AG04450 (cell line): ENCODE measurements at regions of chr6 and their contacts with region 1.

Region 1: GRCh38 chr6:37007340-37008043 is 2.0 kb downstream of the FGD2 start:
- DNase-seq: no peak
- H3K4me3 ChIP-seq: no peak overlapping the region
- H3K27ac ChIP-seq: no peak overlapping the region
- H3K27me3 ChIP-seq: peaks cover 4% of the 10 kb centered on the region
- CTCF ChIP-seq: no peak

Region 2: GRCh38 chr6:36938536-36938935 is 69.0 kb before region 1 on chr6:
- CTCF ChIA-PET with region 1: no interaction called
- POLR2A ChIA-PET with region 1: no interaction called
- DNase-seq: peak; percentile 75
- H3K4me3 ChIP-seq: no peak overlapping the region
- H3K27ac ChIP-seq: no peak overlapping the region
- H3K27me3 ChIP-seq: no peaks in the 10 kb centered on the region
- CTCF ChIP-seq: no peak

Region 3: DNA sequence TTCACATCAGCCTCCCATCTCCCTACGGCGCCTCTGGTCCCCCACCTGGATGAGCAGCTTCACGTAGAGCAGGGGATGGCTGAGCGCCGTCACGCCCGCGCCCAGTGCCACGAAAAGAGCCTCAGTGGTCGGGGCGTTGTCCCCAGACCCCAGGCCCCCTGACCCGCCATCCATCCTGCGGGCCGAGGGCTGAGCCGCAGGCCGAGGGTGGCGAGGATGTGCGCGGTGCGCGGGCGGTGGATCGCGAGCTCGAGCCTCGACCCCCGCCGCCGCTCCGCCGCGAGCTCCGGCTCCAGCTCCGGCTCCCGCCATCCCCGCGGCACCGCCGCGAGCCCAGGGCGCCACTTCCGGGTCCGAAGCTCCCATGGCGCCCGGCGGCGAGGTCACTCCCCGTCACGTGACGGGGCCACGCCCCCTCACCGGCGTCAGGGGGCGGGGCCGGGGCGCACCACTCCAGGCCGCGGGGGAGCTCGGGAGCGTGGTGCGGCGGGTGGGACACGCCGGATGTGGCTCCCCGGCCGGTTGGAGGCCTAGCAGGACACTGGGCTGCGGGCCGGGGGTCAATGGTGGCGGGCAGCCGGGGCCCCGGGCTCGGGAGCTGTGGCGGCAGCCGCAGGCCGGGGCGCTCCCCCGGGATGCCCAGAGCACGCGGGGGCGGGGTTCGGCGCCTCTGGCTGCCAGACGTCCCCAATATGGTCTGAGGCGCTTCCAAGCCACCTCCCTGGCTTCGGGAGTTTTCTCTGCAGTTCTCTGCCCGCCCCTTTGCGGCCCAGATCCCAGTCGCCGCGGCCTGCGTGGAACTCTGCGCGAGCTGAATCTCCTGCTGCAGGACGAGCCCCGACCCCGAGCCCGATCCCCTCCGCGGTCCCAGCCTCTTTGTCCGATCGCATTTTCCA is 21.4 kb before region 1 on chr6 and contains the start of gene MTCH1:
- CTCF ChIA-PET with region 1: no interaction called
- POLR2A ChIA-PET with region 1: interaction called, 10 read pairs
- DNase-seq: peak; percentile 67
- H3K4me3 ChIP-seq: peak within 1 kb of the TSS; percentile 93
- H3K27ac ChIP-seq: peak within 1 kb of the TSS; percentile 69
- H3K27me3 ChIP-seq: peaks cover 4% of the 10 kb centered on the region
- CTCF ChIP-seq: no peak
- polyA plus RNA-seq, gene MTCH1: 149 and 160 TPM in 2 replicates